Breast epithelium (tissue), 4 donors: ENCODE measurements at regions of chr10 and their contacts with region 1.

Region 1: DNA sequence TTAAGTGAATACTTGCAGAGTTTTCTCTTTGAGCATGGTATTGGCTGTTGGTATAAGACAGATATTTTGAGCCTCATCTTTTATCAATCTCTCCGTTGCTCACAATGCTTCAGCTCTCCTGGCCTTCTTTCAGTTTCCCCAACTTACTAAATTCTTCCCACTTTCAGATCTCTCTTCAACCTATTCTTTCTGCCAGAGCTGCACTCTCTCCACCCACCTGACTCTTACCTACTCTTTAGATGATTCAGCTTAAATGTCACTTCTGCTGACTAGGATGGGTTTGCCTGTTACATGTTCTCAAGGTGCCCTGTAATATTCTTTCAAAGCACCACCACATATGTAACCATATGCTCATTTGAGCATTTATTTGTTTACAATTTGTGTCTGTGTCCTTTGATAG is 1.6 kb downstream of the EXOSC1 start:
- DNase-seq: no peak
- H3K4me3 ChIP-seq: no peak overlapping the region
- H3K27ac ChIP-seq: no peak overlapping the region
- H3K4me1 ChIP-seq: peaks cover 4 to 20% of the 10 kb centered on the region in 2 donors
- H3K27me3 ChIP-seq: no peaks in the 10 kb centered on the region
- CTCF ChIP-seq: no peak
- POLR2A ChIP-seq: no peak

Region 2: GRCh38 chr10:95651346-95652060 is 1792.7 kb before region 1 on chr10:
- intact Hi-C with region 1: no loop called
- DNase-seq: no peak
- H3K4me3 ChIP-seq: no peak overlapping the region
- H3K27ac ChIP-seq: no peak overlapping the region
- H3K4me1 ChIP-seq: no peaks in the 10 kb centered on the region
- H3K27me3 ChIP-seq: no peaks in the 10 kb centered on the region
- CTCF ChIP-seq: no peak
- POLR2A ChIP-seq: no peak

Region 3: GRCh38 chr10:96287392-96288105 is 1156.7 kb before region 1 on chr10:
- intact Hi-C with region 1: no loop called
- DNase-seq: no peak
- H3K4me3 ChIP-seq: no peak overlapping the region
- H3K27ac ChIP-seq: peak overlapping the region; percentile 66 to 70
- H3K4me1 ChIP-seq: no peaks in the 10 kb centered on the region
- H3K27me3 ChIP-seq: no peaks in the 10 kb centered on the region
- CTCF ChIP-seq: peak in 1 of 3 donors; percentile 16
- POLR2A ChIP-seq: no peak

Region 4: GRCh38 chr10:97292097-97292862 is 151.9 kb before region 1 on chr10 and contains the start of gene ARHGAP19:
- intact Hi-C with region 1: loop called (anchors 5 kb)
- DNase-seq: peak; percentile 93 to 98
- H3K4me3 ChIP-seq: peak within 1 kb of the TSS; percentile 83 to 95 (median 90)
- H3K27ac ChIP-seq: peak within 1 kb of the TSS; percentile 96
- H3K4me1 ChIP-seq: no peaks in the 10 kb centered on the region
- H3K27me3 ChIP-seq: no peaks in the 10 kb centered on the region
- CTCF ChIP-seq: peak in 1 of 3 donors; percentile 13
- POLR2A ChIP-seq: peak; percentile 34
- total RNA-seq, gene ARHGAP19: 6.4 to 34.4 (median 14.4) TPM